HCT116 (cell line): ENCODE measurements at regions of chr7 and their contacts with region 1.

Region 1: GRCh38 chr7:91034459-91035368 is 229.5 kb upstream of the FZD1 start:
- DNase-seq: peak; percentile 28
- ATAC-seq: peak; percentile 73
- H3K4me3 ChIP-seq: no peak overlapping the region
- H3K27ac ChIP-seq: no peak overlapping the region
- H3K4me1 ChIP-seq: no peaks in the 10 kb centered on the region
- H3K27me3 ChIP-seq: no peaks in the 10 kb centered on the region
- CTCF ChIP-seq: peak; percentile 64 to 69 (median 67); a peak in 5 of 6 replicates
- POLR2A ChIP-seq: no peak
- RAD21 ChIP-seq: peak; percentile 81

Region 2: DNA sequence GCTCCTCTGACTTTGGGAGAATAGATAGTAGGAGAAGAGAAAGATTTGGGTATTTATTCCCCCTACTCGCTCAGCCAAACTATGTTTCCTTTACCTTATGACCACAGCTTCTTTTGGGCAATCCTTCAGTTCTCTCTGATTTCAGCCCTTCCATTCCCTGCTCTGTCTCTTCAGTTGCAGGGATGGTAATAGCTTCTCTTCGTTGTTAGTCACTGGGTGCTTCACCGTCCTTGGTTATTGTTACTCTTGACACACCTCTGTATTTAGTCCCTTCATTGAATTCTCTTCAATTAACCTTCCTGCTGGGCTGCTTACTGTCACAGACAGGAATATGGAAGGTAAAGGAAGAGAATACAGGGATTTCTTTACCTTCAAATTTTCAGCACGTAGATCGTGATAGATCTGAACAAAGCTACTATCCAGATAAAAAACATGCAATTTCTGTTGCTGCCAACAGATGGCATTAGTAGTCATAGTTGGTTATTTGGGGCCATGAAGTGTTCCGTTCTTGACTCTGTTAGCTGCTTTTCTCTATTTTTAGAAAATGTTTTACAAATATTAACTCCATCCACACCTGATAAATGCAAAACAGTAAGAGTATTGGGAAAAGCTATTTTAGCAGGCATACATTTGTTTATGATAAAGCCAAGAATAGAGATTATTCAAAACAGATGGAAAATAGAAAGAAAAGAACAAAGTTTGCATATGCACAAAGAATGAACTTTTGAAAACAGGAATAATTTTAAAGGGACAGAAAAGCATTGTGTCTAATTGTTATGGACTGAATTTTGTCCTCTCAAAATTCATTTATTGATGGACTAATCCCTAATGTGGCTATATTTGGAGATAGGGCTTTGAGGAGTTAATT is 579.3 kb before region 1 on chr7:
- CTCF ChIA-PET with region 1: interaction called, 45 read pairs
- POLR2A ChIA-PET with region 1: no interaction called
- RAD21 ChIA-PET with region 1: interaction called, 4 to 7 read pairs
- intact Hi-C with region 1: loop called (anchors 1 kb)
- DNase-seq: peak; percentile 28
- ATAC-seq: peak; percentile 90
- H3K4me3 ChIP-seq: peak overlapping the region in 1 of 2 experiments; percentile 34; a peak in 2 of 4 replicates
- H3K27ac ChIP-seq: no peak overlapping the region
- H3K4me1 ChIP-seq: peaks cover 0 to 4% of the 10 kb centered on the region in 2 experiments; a peak in 1 of 4 replicates
- H3K27me3 ChIP-seq: no peaks in the 10 kb centered on the region
- CTCF ChIP-seq: peak; percentile 62 to 78 (median 63); a peak in 5 of 6 replicates
- POLR2A ChIP-seq: no peak
- RAD21 ChIP-seq: peak; percentile 74

Region 3: GRCh38 chr7:90552521-90552920 is 482.2 kb before region 1 on chr7:
- CTCF ChIA-PET with region 1: no interaction called
- POLR2A ChIA-PET with region 1: no interaction called
- RAD21 ChIA-PET with region 1: interaction called in 1 of 2 experiments, 3 read pairs
- intact Hi-C with region 1: loop called (anchors 2 kb)
- DNase-seq: no peak
- ATAC-seq: no peak
- H3K4me3 ChIP-seq: no peak overlapping the region
- H3K27ac ChIP-seq: no peak overlapping the region
- H3K4me1 ChIP-seq: no peaks in the 10 kb centered on the region
- H3K27me3 ChIP-seq: no peaks in the 10 kb centered on the region
- CTCF ChIP-seq: peak in 2 of 3 experiments; percentile 28 to 36; a peak in 2 of 6 replicates
- POLR2A ChIP-seq: no peak
- RAD21 ChIP-seq: peak; percentile 56

Region 4: DNA sequence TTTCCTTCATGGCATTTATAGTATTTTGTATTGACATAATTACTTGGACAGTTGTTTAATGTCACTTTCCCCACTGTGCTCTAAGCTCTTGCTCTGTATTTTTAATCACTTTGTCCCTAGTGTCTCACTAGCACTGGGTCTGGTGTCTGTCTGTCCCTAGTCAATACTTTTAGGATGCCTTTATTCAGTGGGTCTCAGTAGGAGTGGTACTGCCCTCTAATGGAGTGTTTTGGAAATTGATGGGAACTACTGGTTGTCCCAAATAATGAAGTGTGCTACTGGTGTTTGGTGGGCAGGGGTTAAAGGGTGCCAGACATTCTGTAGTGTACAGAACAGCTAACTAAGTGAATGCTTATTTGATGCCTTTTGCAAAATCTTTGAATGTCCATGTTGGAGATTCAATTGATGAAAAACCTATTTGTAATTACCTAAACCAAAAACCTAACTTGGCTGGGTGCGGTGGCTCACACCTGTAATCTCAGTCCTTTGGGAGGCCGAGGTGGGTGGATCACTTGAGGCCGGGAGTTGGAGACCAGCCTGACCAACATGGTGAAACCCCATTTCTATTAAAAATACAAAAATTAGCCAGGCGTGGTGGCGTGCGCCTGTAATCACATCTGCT is 405.3 kb before region 1 on chr7:
- CTCF ChIA-PET with region 1: interaction called, 3 read pairs
- POLR2A ChIA-PET with region 1: no interaction called
- RAD21 ChIA-PET with region 1: no interaction called
- intact Hi-C with region 1: loop called (anchors 1 kb)
- DNase-seq: peak; percentile 31
- ATAC-seq: peak; percentile 93
- H3K4me3 ChIP-seq: no peak overlapping the region
- H3K27ac ChIP-seq: no peak overlapping the region
- H3K4me1 ChIP-seq: peaks cover 4 to 8% of the 10 kb centered on the region in 2 experiments; a peak in 2 of 4 replicates
- H3K27me3 ChIP-seq: no peaks in the 10 kb centered on the region
- CTCF ChIP-seq: peak; percentile 52 to 79 (median 65); a peak in 5 of 6 replicates
- POLR2A ChIP-seq: no peak
- RAD21 ChIP-seq: peak; percentile 66

Region 5: GRCh38 chr7:90708841-90709317 is 325.8 kb before region 1 on chr7:
- CTCF ChIA-PET with region 1: interaction called, 11 read pairs
- POLR2A ChIA-PET with region 1: no interaction called
- RAD21 ChIA-PET with region 1: no interaction called
- intact Hi-C with region 1: loop called (anchors 1 kb)
- DNase-seq: peak; percentile 38
- ATAC-seq: peak; percentile 84
- H3K4me3 ChIP-seq: no peak overlapping the region
- H3K27ac ChIP-seq: no peak overlapping the region
- H3K4me1 ChIP-seq: no peaks in the 10 kb centered on the region
- H3K27me3 ChIP-seq: no peaks in the 10 kb centered on the region
- CTCF ChIP-seq: peak; percentile 65 to 94 (median 87); a peak in 5 of 6 replicates
- POLR2A ChIP-seq: no peak
- RAD21 ChIP-seq: peak; percentile 77

Region 6: GRCh38 chr7:90972906-90973550 is 61.7 kb before region 1 on chr7:
- CTCF ChIA-PET with region 1: no interaction called
- POLR2A ChIA-PET with region 1: no interaction called
- RAD21 ChIA-PET with region 1: no interaction called
- intact Hi-C with region 1: loop called (anchors 10 kb)
- DNase-seq: no peak
- ATAC-seq: no peak
- H3K4me3 ChIP-seq: no peak overlapping the region
- H3K27ac ChIP-seq: no peak overlapping the region
- H3K4me1 ChIP-seq: no peaks in the 10 kb centered on the region
- H3K27me3 ChIP-seq: no peaks in the 10 kb centered on the region
- CTCF ChIP-seq: no peak
- POLR2A ChIP-seq: no peak
- RAD21 ChIP-seq: no peak